A549 (cell line): ENCODE measurements at regions of chr9 and their contacts with region 1.

Region 1: GRCh38 chr9:127734747-127735529 is at the start of gene TOR2A:
- DNase-seq: peak; percentile 91 to 97
- ATAC-seq: peak; percentile 92 to 95
- H3K4me3 ChIP-seq: peak within 1 kb of the TSS; percentile 72
- H3K27ac ChIP-seq: peak within 1 kb of the TSS; percentile 96
- H3K4me1 ChIP-seq: peaks cover 12% of the 10 kb centered on the region
- CTCF ChIP-seq: peak; percentile 90
- EP300 ChIP-seq: no peak; a peak in 1 of 5 replicates
- POLR2A ChIP-seq: peak; percentile 78
- RAD21 ChIP-seq: peak; percentile 98
- polyA plus RNA-seq, gene TOR2A: 4.9 and 5.5 TPM in 2 replicates

Region 2: GRCh38 chr9:127611899-127612790 is 122.8 kb before region 1 on chr9 and contains the start of gene STXBP1:
- CTCF ChIA-PET with region 1: interaction called, 60 read pairs
- POLR2A ChIA-PET with region 1: interaction called, 3 read pairs
- DNase-seq: peak; percentile 81 to 84
- ATAC-seq: peak; percentile 72 to 74
- H3K4me3 ChIP-seq: peak within 1 kb of the TSS; percentile 77
- H3K27ac ChIP-seq: peak within 1 kb of the TSS; percentile 73 to 96
- H3K4me1 ChIP-seq: peaks cover 23% of the 10 kb centered on the region
- CTCF ChIP-seq: 0 out of 3 replicates have a peak, but pooled peaks have one; percentile 10
- EP300 ChIP-seq: no peak
- POLR2A ChIP-seq: peak; percentile 59
- RAD21 ChIP-seq: no peak
- polyA plus RNA-seq, gene STXBP1: 13.3 and 20.4 TPM in 2 replicates

Region 3: DNA sequence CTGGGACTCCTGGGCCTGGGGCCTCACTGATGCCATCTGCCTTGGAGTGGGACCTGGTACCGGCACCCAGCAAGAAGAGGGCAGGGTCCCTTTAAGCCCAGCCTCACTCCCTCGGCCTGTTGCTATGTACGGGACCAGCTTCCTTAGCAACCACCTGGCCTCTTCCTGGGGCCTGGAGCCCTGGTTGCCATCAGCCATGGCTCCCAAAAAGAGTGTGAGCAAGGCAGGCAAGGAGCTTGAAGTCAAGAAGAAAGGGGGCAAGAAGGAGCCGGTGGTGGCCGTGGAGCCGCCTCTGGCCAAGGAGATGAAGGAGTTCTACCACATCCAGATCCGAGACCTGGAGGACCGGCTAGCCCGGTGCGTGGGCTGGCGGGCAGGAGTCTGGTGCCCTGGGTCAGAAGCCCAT is 28.1 kb before region 1 on chr9 and contains the start of gene CFAP157:
- CTCF ChIA-PET with region 1: interaction called, 26 read pairs
- POLR2A ChIA-PET with region 1: no interaction called
- DNase-seq: peak; percentile 44 to 55
- ATAC-seq: peak; percentile 60 to 73; a peak in 4 of 6 replicates
- H3K4me3 ChIP-seq: no peak within 1 kb of the TSS
- H3K27ac ChIP-seq: no peak within 1 kb of the TSS
- H3K4me1 ChIP-seq: no peaks in the 10 kb centered on the region
- CTCF ChIP-seq: no peak
- EP300 ChIP-seq: no peak
- POLR2A ChIP-seq: no peak
- RAD21 ChIP-seq: no peak
- polyA plus RNA-seq, gene CFAP157: 0.04 TPM in 1 of 2 replicates, not detected in the other

Region 4: GRCh38 chr9:127763918-127764384 is 29.0 kb after region 1 on chr9:
- CTCF ChIA-PET with region 1: interaction called, 17 read pairs
- POLR2A ChIA-PET with region 1: no interaction called
- DNase-seq: peak in 1 of 2 experiments; percentile 58
- ATAC-seq: peak; percentile 40 to 78; a peak in 4 of 6 replicates
- H3K4me3 ChIP-seq: no peak overlapping the region
- H3K27ac ChIP-seq: no peak overlapping the region
- H3K4me1 ChIP-seq: no peaks in the 10 kb centered on the region
- CTCF ChIP-seq: no peak
- EP300 ChIP-seq: no peak
- POLR2A ChIP-seq: no peak
- RAD21 ChIP-seq: peak in 1 of 2 experiments; percentile 24; a peak in 1 of 5 replicates

Region 5: DNA sequence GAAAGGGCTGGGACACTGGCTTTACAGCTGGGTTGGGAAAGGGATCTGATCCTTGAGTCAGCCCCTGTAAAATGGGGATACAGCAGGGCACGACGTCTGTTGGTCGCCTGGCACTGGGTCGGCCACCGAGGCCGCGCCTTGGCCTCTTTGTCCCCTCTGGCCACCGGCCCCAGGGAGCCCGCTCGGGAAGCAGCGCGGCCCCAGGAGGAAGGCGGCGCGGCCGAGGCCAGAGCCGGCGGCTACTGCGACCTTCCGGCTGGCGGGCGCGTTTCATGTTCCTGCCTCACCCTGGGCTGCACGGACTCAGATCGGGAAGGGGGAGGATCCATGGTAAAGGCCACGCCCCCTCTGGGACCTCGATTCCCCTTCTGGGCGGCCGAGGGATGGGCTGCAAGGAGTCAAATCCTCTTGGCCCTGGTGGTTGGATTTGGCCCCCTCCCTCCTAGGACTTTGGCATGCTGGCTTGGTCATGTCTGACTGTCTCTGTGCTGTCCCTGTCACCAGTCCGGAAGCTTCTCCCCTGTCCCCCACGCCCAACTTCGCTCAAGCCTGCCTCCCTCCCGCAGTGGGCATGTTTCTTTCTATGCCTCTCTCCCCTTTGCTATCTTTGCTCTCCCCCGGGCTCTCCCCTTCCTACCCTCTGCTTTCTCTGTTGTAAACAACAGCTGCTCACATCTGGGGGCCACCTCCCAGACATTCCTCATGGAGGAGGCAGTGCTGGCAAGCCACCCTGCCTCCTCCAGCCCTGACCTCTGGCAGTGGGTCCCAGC is 93.5 kb after region 1 on chr9:
- CTCF ChIA-PET with region 1: interaction called, 14 read pairs
- POLR2A ChIA-PET with region 1: no interaction called
- DNase-seq: peak; percentile 62 to 87
- ATAC-seq: peak; percentile 68 to 79
- H3K4me3 ChIP-seq: peak overlapping the region; percentile 32
- H3K27ac ChIP-seq: peak overlapping the region; percentile 66 to 77
- H3K4me1 ChIP-seq: peaks cover 9% of the 10 kb centered on the region
- CTCF ChIP-seq: no peak
- EP300 ChIP-seq: no peak
- POLR2A ChIP-seq: peak; percentile 24; the same call in 1 of the 2 replicates
- RAD21 ChIP-seq: no peak